ENCODE measurements at regions of chr5 and their contacts with region 1.

Region 1: DNA sequence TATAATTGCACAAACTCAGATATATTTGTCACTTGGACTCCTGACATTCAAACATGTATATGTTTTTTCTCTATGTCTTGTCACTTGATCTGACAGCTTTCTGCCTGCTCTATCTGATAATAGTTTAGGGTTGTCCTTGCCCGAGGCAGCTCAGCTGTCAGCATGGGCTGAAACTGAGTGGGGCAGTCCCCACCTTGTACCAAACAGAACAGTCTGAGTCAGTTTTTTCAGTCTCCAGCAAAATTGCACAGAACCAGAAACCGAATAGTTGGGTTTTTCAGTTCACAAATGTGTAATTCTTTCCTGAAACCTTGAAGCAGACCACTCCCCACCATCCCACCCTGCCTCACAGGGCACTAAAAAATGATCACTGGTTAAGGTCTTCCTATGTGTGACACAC is 9.5 kb upstream of the HAND1 start:
- DNase-seq: peak; percentile 77
- ATAC-seq: peak; percentile 98
- H3K4me3 Mint-ChIP-seq: no peak overlapping the region
- H3K27ac Mint-ChIP-seq: no peak overlapping the region
- H3K4me1 Mint-ChIP-seq: peaks cover 26% of the 10 kb centered on the region
- H3K27me3 Mint-ChIP-seq: peaks cover 68% of the 10 kb centered on the region
- CTCF ChIP-seq: no peak

Region 2: GRCh38 chr5:154467655-154468354 is 19.7 kb before region 1 on chr5:
- CTCF ChIA-PET with region 1: interaction called, 15 read pairs
- POLR2A ChIA-PET with region 1: interaction called, 6 read pairs
- intact Hi-C with region 1: no loop called
- DNase-seq: peak; percentile 87
- ATAC-seq: peak; percentile 95
- H3K4me3 Mint-ChIP-seq: no peak overlapping the region
- H3K27ac Mint-ChIP-seq: no peak overlapping the region
- H3K4me1 Mint-ChIP-seq: peaks cover 5% of the 10 kb centered on the region
- H3K27me3 Mint-ChIP-seq: peaks cover 35% of the 10 kb centered on the region
- CTCF ChIP-seq: peak; percentile 93

Region 3: GRCh38 chr5:154475591-154476353 is 11.8 kb before region 1 on chr5:
- CTCF ChIA-PET with region 1: interaction called, 15 read pairs
- POLR2A ChIA-PET with region 1: interaction called, 6 read pairs
- intact Hi-C with region 1: no loop called
- DNase-seq: no peak
- ATAC-seq: no peak
- H3K4me3 Mint-ChIP-seq: peak overlapping the region; percentile 20
- H3K27ac Mint-ChIP-seq: no peak overlapping the region
- H3K4me1 Mint-ChIP-seq: peaks cover 56% of the 10 kb centered on the region
- H3K27me3 Mint-ChIP-seq: peaks cover 85% of the 10 kb centered on the region
- CTCF ChIP-seq: no peak

Region 4: DNA sequence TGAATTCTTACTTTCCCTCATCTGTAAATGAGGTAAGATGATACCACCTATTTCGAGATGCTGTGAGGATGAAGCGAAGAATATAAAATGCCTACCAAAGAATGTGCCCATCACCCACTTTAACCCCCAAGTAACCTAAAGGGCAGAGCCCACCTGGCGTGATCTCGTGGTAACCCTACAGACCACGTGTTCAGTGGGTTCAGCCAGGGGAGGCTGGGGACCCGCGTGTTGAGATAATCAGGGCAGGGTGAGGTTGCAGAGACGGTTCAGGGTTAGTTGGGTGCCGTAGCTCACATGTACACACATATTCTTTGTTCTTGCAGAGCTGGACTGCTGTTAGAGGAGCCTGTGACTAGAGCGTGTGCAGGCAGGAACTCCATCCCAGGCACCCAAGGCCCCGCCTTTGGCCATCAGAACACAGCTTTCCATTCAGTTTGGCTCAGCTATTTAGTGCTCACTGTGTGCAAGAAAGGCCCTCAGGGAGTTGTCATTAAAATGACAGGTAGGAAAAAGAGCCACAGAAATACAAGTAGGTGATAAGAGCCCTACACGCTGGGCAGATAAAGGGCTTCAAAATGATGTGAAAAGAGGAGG is 47.0 kb after region 1 on chr5:
- CTCF ChIA-PET with region 1: no interaction called
- POLR2A ChIA-PET with region 1: no interaction called
- intact Hi-C with region 1: no loop called
- DNase-seq: no peak
- ATAC-seq: no peak
- H3K4me3 Mint-ChIP-seq: no peak overlapping the region
- H3K27ac Mint-ChIP-seq: no peak overlapping the region
- H3K4me1 Mint-ChIP-seq: no peaks in the 10 kb centered on the region
- H3K27me3 Mint-ChIP-seq: peaks cover 19% of the 10 kb centered on the region
- CTCF ChIP-seq: no peak

Region 5: GRCh38 chr5:154761046-154761736 is 273.6 kb after region 1 on chr5:
- CTCF ChIA-PET with region 1: no interaction called
- POLR2A ChIA-PET with region 1: no interaction called
- intact Hi-C with region 1: no loop called
- DNase-seq: peak; percentile 64
- ATAC-seq: peak; percentile 43
- H3K4me3 Mint-ChIP-seq: peak overlapping the region; percentile 46
- H3K27ac Mint-ChIP-seq: peak overlapping the region; percentile 85
- H3K4me1 Mint-ChIP-seq: peaks cover 68% of the 10 kb centered on the region
- H3K27me3 Mint-ChIP-seq: no peaks in the 10 kb centered on the region
- CTCF ChIP-seq: no peak

Measured in activated CD8-positive, alpha-beta T cell treated with anti-CD3 and anti-CD28 coated beads for 36 hours (primary cell).